CD8-positive, alpha-beta T cell (primary cell): ENCODE measurements at regions of chr17 and their contacts with region 1.

Region 1: GRCh38 chr17:18960803-18961511 is 9.0 kb downstream of the SLC5A10 start:
- DNase-seq: peak; percentile 44 to 89 (median 77)
- ATAC-seq: peak; percentile 85
- H3K4me3 ChIP-seq: no peak overlapping the region
- H3K4me3 Mint-ChIP-seq: no peak overlapping the region
- H3K27ac ChIP-seq: no peak overlapping the region
- H3K27ac Mint-ChIP-seq: no peak overlapping the region
- H3K4me1 ChIP-seq: peaks cover 20% of the 10 kb centered on the region
- H3K4me1 Mint-ChIP-seq: peaks cover 28% of the 10 kb centered on the region
- H3K27me3 ChIP-seq: no peaks in the 10 kb centered on the region
- H3K27me3 Mint-ChIP-seq: no peaks in the 10 kb centered on the region
- CTCF ChIP-seq: peak; percentile 88

Region 2: DNA sequence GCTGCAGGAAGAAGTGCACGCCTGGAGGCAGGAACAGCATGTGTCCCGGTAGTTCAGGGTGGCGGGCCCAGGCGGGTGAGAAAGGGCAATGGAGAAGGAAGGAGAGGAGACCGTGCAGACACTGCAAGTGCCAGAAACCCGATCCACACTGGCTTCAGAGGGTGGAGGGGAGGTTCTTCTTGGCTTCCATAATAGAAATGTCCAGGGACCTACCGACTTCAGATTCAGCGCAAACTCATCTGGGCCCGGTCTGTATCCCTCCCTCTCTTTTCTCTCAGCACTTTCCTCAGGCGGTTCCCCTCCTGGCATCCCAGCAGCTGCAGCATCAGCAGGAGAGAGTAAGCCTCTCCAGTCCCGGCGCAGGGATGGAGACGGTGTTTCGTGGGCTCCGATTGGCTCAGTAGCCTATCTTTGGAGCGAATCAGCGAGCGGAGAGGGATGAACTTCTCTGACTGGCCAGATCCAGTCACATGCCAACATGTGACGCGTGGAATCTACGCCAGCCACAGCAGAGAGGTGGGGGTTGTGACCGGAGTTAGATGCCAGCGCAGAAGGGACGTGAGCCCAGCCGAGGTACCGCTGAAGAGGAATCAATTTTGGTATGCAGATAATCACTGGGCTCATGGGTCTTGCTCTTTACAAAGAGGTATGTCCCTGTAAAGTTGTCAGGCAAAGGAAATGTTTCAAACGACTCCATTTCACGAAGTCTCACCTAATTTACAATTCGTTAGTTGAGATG is 105.0 kb before region 1 on chr17:
- CTCF ChIA-PET with region 1: interaction called, 15 read pairs
- POLR2A ChIA-PET with region 1: interaction called, 3 read pairs
- intact Hi-C with region 1: no loop called
- DNase-seq: peak; percentile 72 to 95 (median 88)
- ATAC-seq: peak; percentile 84
- H3K4me3 ChIP-seq: peak overlapping the region; percentile 66 to 72
- H3K4me3 Mint-ChIP-seq: peak overlapping the region; percentile 91
- H3K27ac ChIP-seq: peak overlapping the region; percentile 32 to 62
- H3K27ac Mint-ChIP-seq: peak overlapping the region; percentile 92
- H3K4me1 ChIP-seq: peaks cover 37% of the 10 kb centered on the region
- H3K4me1 Mint-ChIP-seq: peaks cover 45% of the 10 kb centered on the region
- H3K27me3 ChIP-seq: no peaks in the 10 kb centered on the region
- H3K27me3 Mint-ChIP-seq: no peaks in the 10 kb centered on the region
- CTCF ChIP-seq: no peak

Region 3: GRCh38 chr17:18937981-18938691 is 22.8 kb before region 1 on chr17:
- CTCF ChIA-PET with region 1: interaction called, 23 read pairs
- POLR2A ChIA-PET with region 1: interaction called, 6 read pairs
- intact Hi-C with region 1: no loop called
- DNase-seq: no peak
- ATAC-seq: no peak
- H3K4me3 ChIP-seq: no peak overlapping the region
- H3K4me3 Mint-ChIP-seq: no peak overlapping the region
- H3K27ac ChIP-seq: no peak overlapping the region
- H3K27ac Mint-ChIP-seq: no peak overlapping the region
- H3K4me1 ChIP-seq: peaks cover 4% of the 10 kb centered on the region
- H3K4me1 Mint-ChIP-seq: peaks cover 9% of the 10 kb centered on the region
- H3K27me3 ChIP-seq: no peaks in the 10 kb centered on the region
- H3K27me3 Mint-ChIP-seq: no peaks in the 10 kb centered on the region
- CTCF ChIP-seq: no peak

Region 4: GRCh38 chr17:18993905-18994526 is 33.1 kb after region 1 on chr17:
- CTCF ChIA-PET with region 1: interaction called, 16 read pairs
- POLR2A ChIA-PET with region 1: no interaction called
- intact Hi-C with region 1: no loop called
- DNase-seq: no peak
- ATAC-seq: no peak
- H3K4me3 ChIP-seq: no peak overlapping the region
- H3K4me3 Mint-ChIP-seq: no peak overlapping the region
- H3K27ac ChIP-seq: no peak overlapping the region
- H3K27ac Mint-ChIP-seq: no peak overlapping the region
- H3K4me1 ChIP-seq: peaks cover 20% of the 10 kb centered on the region
- H3K4me1 Mint-ChIP-seq: peaks cover 32% of the 10 kb centered on the region
- H3K27me3 ChIP-seq: no peaks in the 10 kb centered on the region
- H3K27me3 Mint-ChIP-seq: no peaks in the 10 kb centered on the region
- CTCF ChIP-seq: no peak

Region 5: GRCh38 chr17:19024101-19025078 is 63.4 kb after region 1 on chr17:
- CTCF ChIA-PET with region 1: interaction called, 17 read pairs
- POLR2A ChIA-PET with region 1: interaction called, 3 read pairs
- intact Hi-C with region 1: no loop called
- DNase-seq: peak in 2 of 9 experiments; percentile 23 to 36
- ATAC-seq: peak; percentile 59
- H3K4me3 ChIP-seq: no peak overlapping the region
- H3K4me3 Mint-ChIP-seq: peak overlapping the region; percentile 39
- H3K27ac ChIP-seq: peak overlapping the region in 1 of 2 experiments; percentile 8
- H3K27ac Mint-ChIP-seq: peak overlapping the region; percentile 84
- H3K4me1 ChIP-seq: peaks cover 14% of the 10 kb centered on the region
- H3K4me1 Mint-ChIP-seq: peaks cover 16% of the 10 kb centered on the region
- H3K27me3 ChIP-seq: no peaks in the 10 kb centered on the region
- H3K27me3 Mint-ChIP-seq: no peaks in the 10 kb centered on the region
- CTCF ChIP-seq: no peak